ENCODE measurements at regions of chr6 and their contacts with region 1.

Region 1: DNA sequence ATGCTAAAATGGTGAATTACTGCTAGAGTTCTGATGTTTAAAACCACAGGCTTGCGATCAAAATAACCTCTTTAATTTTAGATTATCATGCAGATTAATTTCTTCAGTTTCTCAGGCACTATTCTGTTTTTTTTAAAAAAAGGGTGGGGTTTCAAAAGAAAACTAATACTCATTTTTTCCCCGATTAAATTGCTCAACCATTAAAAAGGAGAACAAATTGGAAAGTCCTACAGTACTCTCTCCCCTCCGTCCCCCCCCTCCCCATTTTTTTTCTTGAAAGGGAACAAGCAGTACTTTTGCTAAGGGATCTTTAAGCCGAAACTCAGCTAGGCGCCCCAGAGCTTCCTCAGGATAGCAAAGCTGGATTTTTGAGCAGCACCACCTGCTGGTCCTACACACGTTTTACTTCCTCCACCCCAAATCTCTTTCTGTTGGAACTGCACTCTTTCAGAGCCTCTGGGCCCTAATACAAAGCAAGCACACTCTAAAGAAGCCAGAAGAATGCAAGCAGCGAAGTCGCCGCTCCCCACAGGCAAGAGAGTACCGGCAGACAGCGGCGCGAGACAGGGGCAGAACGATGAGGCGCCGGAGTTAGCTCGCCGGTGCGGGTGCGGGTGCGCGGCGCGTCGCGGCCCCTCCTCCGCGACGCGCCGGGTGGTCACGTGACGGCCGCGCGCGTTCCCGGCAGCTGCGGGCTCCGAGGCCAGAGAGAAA is at the start of gene RNF146:
- DNase-seq: peak; percentile 76
- H3K4me3 Mint-ChIP-seq: peak within 1 kb of the TSS; percentile 98
- H3K27ac Mint-ChIP-seq: peak within 1 kb of the TSS; percentile 100
- H3K4me1 Mint-ChIP-seq: peaks cover 34% of the 10 kb centered on the region
- H3K27me3 Mint-ChIP-seq: peaks cover 4% of the 10 kb centered on the region
- total RNA-seq, gene RNF146: 27.9 to 30.5 TPM

Region 2: GRCh38 chr6:127255286-127255685 is 11.0 kb before region 1 on chr6:
- CTCF ChIA-PET with region 1: interaction called, 10 read pairs
- POLR2A ChIA-PET with region 1: no interaction called
- DNase-seq: no peak
- H3K4me3 Mint-ChIP-seq: no peak overlapping the region
- H3K27ac Mint-ChIP-seq: no peak overlapping the region
- H3K4me1 Mint-ChIP-seq: no peaks in the 10 kb centered on the region
- H3K27me3 Mint-ChIP-seq: peaks cover 8% of the 10 kb centered on the region

Region 3: GRCh38 chr6:127291495-127291894 is 25.2 kb after region 1 on chr6:
- CTCF ChIA-PET with region 1: interaction called, 28 read pairs
- POLR2A ChIA-PET with region 1: interaction called, 16 read pairs
- DNase-seq: no peak
- H3K4me3 Mint-ChIP-seq: no peak overlapping the region
- H3K27ac Mint-ChIP-seq: no peak overlapping the region
- H3K4me1 Mint-ChIP-seq: peaks cover 20% of the 10 kb centered on the region
- H3K27me3 Mint-ChIP-seq: no peaks in the 10 kb centered on the region

Region 4: DNA sequence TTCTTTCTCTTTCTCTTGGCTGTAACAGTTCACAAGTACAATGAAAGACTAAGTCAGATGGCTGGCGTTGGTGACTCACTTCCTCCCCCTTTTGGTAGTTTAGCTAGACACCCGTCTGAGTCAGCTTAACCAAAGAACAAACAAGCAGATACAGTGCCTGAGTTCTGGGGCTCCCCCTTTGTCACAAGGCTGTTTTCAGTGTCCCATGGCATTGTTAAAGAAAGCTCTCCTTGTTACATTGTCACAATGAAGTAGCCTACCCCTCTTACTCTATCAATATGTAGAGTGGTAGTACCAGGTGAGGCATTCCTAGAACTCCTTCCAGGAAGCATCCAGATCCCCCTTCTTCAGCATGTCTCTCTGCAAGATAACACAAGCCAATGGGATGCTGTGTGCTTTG is 154.2 kb after region 1 on chr6:
- CTCF ChIA-PET with region 1: interaction called, 10 read pairs
- POLR2A ChIA-PET with region 1: no interaction called
- DNase-seq: peak; percentile 83
- H3K4me3 Mint-ChIP-seq: no peak overlapping the region
- H3K27ac Mint-ChIP-seq: peak overlapping the region; percentile 4
- H3K4me1 Mint-ChIP-seq: peaks cover 12% of the 10 kb centered on the region
- H3K27me3 Mint-ChIP-seq: no peaks in the 10 kb centered on the region

Measured in activated CD4-positive, alpha-beta memory T cell treated with anti-CD3 and anti-CD28 coated beads, Interleukin-2, amount 10 ng/mL, durations not matched to agents 7 days and 5 days (primary cell).